ENCODE measurements at regions of chr11 and their contacts with region 1.

Region 1: GRCh38 chr11:75603791-75604736 is 42.0 kb downstream of the SERPINH1 start:
- DNase-seq: peak; percentile 59
- H3K4me3 ChIP-seq: no peak overlapping the region
- H3K27me3 ChIP-seq: no peaks in the 10 kb centered on the region
- CTCF ChIP-seq: no peak

Region 2: DNA sequence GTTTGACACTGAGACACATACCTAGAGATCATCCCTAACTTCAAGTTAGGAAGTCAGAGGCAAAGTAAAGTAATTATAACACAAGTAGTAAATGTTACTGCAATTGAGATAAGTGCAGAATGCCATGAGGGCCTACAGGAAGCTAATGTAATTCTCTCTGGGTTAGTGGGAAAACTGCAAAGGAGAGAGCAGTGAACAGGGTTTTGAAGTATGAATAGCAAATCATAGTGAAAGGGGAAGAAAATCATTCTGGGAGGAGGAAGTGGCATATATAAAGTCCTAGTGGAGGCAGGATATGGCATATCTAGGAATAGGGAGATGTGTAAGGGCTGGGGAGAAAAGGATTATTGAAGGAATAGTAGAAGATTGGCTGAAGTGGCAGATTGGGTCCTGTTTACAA is 827.5 kb before region 1 on chr11:
- CTCF ChIA-PET with region 1: no interaction called
- POLR2A ChIA-PET with region 1: interaction called, 11 read pairs
- DNase-seq: no peak
- H3K4me3 ChIP-seq: no peak overlapping the region
- H3K27me3 ChIP-seq: no peaks in the 10 kb centered on the region
- CTCF ChIP-seq: no peak

Region 3: DNA sequence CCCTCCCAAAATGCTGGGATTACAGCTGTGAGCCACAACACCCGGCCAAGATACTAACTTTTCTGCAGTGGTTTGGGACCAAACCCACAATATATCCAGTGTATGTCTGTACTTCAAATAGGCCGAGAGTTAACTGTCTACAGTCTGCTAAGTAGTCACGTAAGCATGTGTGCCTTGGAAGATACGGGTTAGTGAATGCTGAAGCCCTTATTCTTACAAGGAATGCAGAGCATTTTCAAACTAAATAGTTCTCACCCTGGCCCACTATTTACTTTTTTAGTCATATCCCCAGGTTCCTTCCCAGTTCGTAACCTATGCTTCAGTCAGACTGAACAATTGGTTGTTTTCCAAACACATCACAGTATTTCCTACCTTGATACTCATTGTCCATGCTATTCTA is 426.2 kb after region 1 on chr11:
- CTCF ChIA-PET with region 1: no interaction called
- POLR2A ChIA-PET with region 1: no interaction called
- DNase-seq: no peak
- H3K4me3 ChIP-seq: no peak overlapping the region
- H3K27me3 ChIP-seq: no peaks in the 10 kb centered on the region
- CTCF ChIP-seq: no peak